ENCODE measurements at regions of chr4 and their contacts with region 1.

Region 1: DNA sequence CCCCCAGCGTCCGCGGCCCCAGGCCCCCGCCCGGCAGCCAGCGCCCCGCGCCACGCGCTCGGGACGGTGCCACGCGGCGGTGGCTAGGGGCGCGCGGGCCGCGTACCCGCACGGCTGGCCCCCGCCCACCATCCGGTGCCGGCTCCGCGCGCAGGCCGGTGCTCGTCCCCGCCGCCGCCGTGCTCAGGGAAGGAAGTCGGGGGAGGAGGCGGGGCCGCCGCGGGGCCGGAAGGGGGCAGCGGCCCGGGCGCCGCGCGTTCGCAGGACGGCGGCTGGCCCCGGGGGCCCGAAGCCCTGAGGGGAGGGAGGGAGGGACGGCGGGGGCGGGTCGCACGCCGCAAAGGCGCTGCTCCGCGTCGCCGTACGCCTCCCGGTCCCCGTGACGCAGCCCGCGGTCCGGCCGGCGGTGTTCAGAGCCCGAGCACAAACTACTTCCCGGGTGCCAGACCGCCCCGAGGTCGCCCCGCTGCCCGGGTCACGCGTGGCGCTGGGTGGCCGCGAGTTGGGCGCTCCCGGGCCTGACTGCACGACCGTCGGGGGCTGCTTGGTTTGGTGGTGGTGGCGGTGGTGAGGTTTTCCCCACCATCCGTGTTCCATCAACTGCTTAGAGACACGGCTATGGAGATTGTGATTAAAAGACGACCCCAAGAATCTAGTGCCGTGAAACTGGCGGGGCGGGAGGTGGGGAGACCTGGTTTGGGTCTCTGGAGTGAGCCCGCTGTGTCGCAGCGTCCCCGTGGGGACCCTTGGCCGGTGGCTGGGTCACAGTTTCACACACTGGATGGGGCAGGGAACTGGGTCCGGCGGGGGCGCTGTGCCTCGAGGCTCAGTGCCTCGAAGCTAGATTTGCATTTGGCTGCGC is at the start of gene DCTD:
- DNase-seq: peak; percentile 91
- H3K4me3 ChIP-seq: peak within 1 kb of the TSS; percentile 69 to 86
- H3K27ac ChIP-seq: peak within 1 kb of the TSS; percentile 80 to 85
- H3K4me1 ChIP-seq: peaks cover 5 to 12% of the 10 kb centered on the region in 2 experiments; a peak in 3 of 4 replicates
- H3K27me3 ChIP-seq: no peaks in the 10 kb centered on the region
- CTCF ChIP-seq: peak; percentile 59
- EP300 ChIP-seq: no peak
- RAD21 ChIP-seq: no peak
- polyA plus RNA-seq, gene DCTD: 123 and 145 TPM in 2 replicates

Region 2: DNA sequence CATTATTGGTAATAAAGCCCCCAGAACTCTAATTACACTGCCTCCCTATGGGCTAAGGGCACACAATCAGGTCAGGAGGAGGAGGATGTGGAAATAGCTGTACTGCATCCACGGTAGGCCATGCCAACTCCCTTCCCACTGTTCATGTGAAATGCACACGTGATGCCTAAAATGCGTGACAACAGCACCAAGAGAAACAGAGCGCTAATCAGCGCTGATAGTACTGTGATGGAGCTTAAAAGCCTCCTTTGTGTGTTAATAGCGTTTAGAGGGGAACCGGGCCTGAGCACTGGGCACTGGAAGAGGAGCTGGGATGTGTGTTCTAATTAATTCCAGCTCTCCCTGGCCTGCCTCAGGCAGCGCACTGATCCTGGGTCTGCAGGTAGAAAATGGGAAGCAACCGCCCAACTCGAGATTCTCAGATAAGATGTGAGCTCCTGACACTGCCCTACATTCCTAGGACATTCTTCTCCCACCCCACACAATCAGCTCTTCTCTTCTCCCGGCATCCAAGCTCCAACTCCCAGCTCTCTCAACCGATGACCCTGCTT is 13.1 kb before region 1 on chr4:
- CTCF ChIA-PET with region 1: interaction called, 6 read pairs
- POLR2A ChIA-PET with region 1: interaction called, 12 read pairs
- DNase-seq: peak; percentile 81
- H3K4me3 ChIP-seq: no peak overlapping the region
- H3K27ac ChIP-seq: peak overlapping the region in 1 of 2 experiments; percentile 58; a peak in 2 of 4 replicates
- H3K4me1 ChIP-seq: peaks cover 0 to 21% of the 10 kb centered on the region in 2 experiments; a peak in 3 of 4 replicates
- H3K27me3 ChIP-seq: no peaks in the 10 kb centered on the region
- CTCF ChIP-seq: no peak
- EP300 ChIP-seq: peak in 1 of 2 experiments; percentile 79; a peak in 1 of 4 replicates
- RAD21 ChIP-seq: no peak; the same call in 1 of the 2 replicates

Region 3: GRCh38 chr4:183022617-183023016 is 105.2 kb after region 1 on chr4:
- CTCF ChIA-PET with region 1: no interaction called
- POLR2A ChIA-PET with region 1: no interaction called
- DNase-seq: no peak
- H3K4me3 ChIP-seq: no peak overlapping the region
- H3K27ac ChIP-seq: no peak overlapping the region
- H3K4me1 ChIP-seq: no peaks in the 10 kb centered on the region
- H3K27me3 ChIP-seq: peaks cover 17% of the 10 kb centered on the region; the same call in 1 of the 2 replicates
- CTCF ChIP-seq: no peak
- EP300 ChIP-seq: no peak
- RAD21 ChIP-seq: no peak

Region 4: DNA sequence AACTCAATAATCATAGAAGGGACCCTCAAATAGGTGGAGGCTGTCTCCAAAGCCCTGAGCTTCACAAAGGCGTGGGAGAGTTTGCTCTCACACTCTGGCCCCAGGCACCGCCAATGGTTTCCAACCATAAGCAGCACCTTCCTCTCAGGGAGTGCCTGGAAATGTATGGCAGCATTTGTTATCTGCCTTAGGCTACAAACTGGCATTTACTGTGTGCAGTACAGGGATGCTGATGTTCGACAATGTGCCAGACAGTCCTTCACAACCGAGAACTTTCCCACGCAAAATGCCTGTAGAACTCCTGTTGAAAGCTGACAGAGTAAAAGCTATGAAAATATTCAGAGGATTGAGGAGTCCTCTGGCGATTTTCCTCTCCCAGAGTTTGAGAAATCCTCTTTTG is 471.4 kb after region 1 on chr4:
- CTCF ChIA-PET with region 1: no interaction called
- POLR2A ChIA-PET with region 1: no interaction called
- DNase-seq: no peak
- H3K4me3 ChIP-seq: no peak overlapping the region
- H3K27ac ChIP-seq: no peak overlapping the region
- H3K4me1 ChIP-seq: no peaks in the 10 kb centered on the region
- H3K27me3 ChIP-seq: no peaks in the 10 kb centered on the region
- CTCF ChIP-seq: no peak
- EP300 ChIP-seq: no peak
- RAD21 ChIP-seq: no peak

Measured in SK-N-SH (cell line).